ENCODE measurements at regions of chr17 and their contacts with region 1.

Region 1: GRCh38 chr17:12020642-12021622 is at the start of gene MAP2K4:
- DNase-seq: peak; percentile 85 to 92 (median 91)
- H3K4me3 ChIP-seq: peak within 1 kb of the TSS; percentile 64 to 85 (median 76)
- H3K27ac ChIP-seq: peak within 1 kb of the TSS; percentile 70 to 91
- H3K4me1 ChIP-seq: peaks cover 4 to 18% (median 10%) of the 10 kb centered on the region in 4 experiments
- H3K27me3 ChIP-seq: peaks cover 0 to 10% (median 3%) of the 10 kb centered on the region in 5 experiments

Region 2: GRCh38 chr17:11997147-11997846 is 23.6 kb before region 1 on chr17 and contains the start of gene ZNF18:
- CTCF ChIA-PET with region 1: interaction called, 8 read pairs
- POLR2A ChIA-PET with region 1: interaction called, 15 read pairs
- DNase-seq: peak; percentile 94 to 97 (median 97)
- H3K4me3 ChIP-seq: peak within 1 kb of the TSS; percentile 85 to 97 (median 91)
- H3K27ac ChIP-seq: peak within 1 kb of the TSS; percentile 70 to 83
- H3K4me1 ChIP-seq: peaks cover 8 to 17% (median 11%) of the 10 kb centered on the region in 4 experiments
- H3K27me3 ChIP-seq: no peaks in the 10 kb centered on the region

Measured in common myeloid progenitor, CD34-positive (primary cell).